ENCODE measurements at regions of chr7 and their contacts with region 1.

Region 1: DNA sequence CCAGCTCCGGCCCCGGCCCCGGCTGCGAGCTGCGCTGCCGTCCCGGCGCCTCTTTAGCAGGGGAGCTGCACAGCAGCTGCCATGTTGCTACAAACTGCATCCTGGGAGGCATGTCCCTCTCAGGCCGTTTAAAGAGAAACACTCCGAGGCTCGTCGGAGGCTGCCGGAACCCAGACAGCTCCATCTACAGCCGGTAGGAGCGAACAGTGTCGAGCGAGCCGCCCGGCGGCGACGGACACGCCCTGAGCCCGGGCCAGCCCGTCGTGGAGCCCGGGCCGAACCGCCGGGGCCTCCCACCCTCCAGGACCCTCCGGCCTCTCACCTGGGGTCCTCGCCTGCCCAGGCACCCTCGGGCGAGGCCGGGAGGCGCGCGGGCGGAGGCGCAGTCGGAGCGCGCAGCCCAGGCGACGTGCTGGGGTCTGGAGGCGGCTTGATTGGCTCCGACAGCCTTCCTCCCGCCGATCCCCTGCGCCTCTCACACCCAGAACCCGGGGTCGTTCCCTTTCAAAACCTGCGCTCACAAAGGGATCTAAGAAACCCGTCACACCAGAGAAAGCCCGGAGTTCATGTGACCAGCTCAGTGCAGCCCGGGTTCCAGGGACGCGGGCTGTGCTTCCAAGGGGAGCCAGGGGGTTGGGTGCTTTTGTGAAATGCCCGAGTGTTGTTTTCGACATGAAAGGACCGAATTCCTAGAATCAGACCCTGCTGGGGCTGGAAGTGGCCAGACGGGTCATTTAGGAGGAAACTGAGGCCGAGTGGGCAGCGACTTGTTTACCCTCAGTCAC is at the start of gene ZNF777:
- DNase-seq: peak; percentile 65 to 84 (median 80)
- ATAC-seq: peak; percentile 99
- H3K4me3 ChIP-seq: peak within 1 kb of the TSS; percentile 80
- H3K4me3 Mint-ChIP-seq: peak within 1 kb of the TSS; percentile 78 to 91 (median 87)
- H3K27ac ChIP-seq: peak within 1 kb of the TSS; percentile 72
- H3K27ac Mint-ChIP-seq: peak within 1 kb of the TSS; percentile 28 to 89 (median 76)
- H3K4me1 ChIP-seq: peaks cover 4 to 16% of the 10 kb centered on the region in 2 donors
- H3K4me1 Mint-ChIP-seq: peaks cover 13 to 46% (median 35%) of the 10 kb centered on the region in 7 donors
- H3K27me3 ChIP-seq: no peaks in the 10 kb centered on the region
- H3K27me3 Mint-ChIP-seq: peaks cover 4 to 29% (median 10%) of the 10 kb centered on the region in 5 donors
- total RNA-seq, gene ZNF777: 11.2 to 16.1 (median 14.3) TPM

Region 2: GRCh38 chr7:149239345-149240191 is 221.1 kb before region 1 on chr7 and contains the start of gene ZNF212:
- CTCF ChIA-PET with region 1: no interaction called
- POLR2A ChIA-PET with region 1: no interaction called
- intact Hi-C with region 1: loop called in 1 of 2 experiments (anchors 1 kb)
- DNase-seq: peak; percentile 75 to 89 (median 84)
- ATAC-seq: peak; percentile 100
- H3K4me3 ChIP-seq: peak within 1 kb of the TSS; percentile 90
- H3K4me3 Mint-ChIP-seq: peak within 1 kb of the TSS; percentile 85 to 95 (median 92)
- H3K27ac ChIP-seq: peak within 1 kb of the TSS; percentile 76
- H3K27ac Mint-ChIP-seq: peak within 1 kb of the TSS; percentile 71 to 89 (median 87)
- H3K4me1 ChIP-seq: peaks cover 14 to 16% of the 10 kb centered on the region in 2 donors
- H3K4me1 Mint-ChIP-seq: peaks cover 23 to 43% (median 33%) of the 10 kb centered on the region in 7 donors
- H3K27me3 ChIP-seq: no peaks in the 10 kb centered on the region
- H3K27me3 Mint-ChIP-seq: peaks cover 0 to 6% (median 0%) of the 10 kb centered on the region in 5 donors
- total RNA-seq, gene ZNF212: 10.4 to 20.6 (median 13.3) TPM

Region 3: GRCh38 chr7:149310113-149310836 is 150.4 kb before region 1 on chr7:
- CTCF ChIA-PET with region 1: no interaction called
- POLR2A ChIA-PET with region 1: no interaction called
- intact Hi-C with region 1: loop called in 1 of 2 experiments (anchors 1 kb)
- DNase-seq: peak in 3 of 9 donors; percentile 11 to 30 (median 26)
- ATAC-seq: peak; percentile 65
- H3K4me3 ChIP-seq: no peak overlapping the region
- H3K4me3 Mint-ChIP-seq: peak overlapping the region in 1 of 10 donors; percentile 0
- H3K27ac ChIP-seq: no peak overlapping the region
- H3K27ac Mint-ChIP-seq: peak overlapping the region in 5 of 9 donors; percentile 2 to 42 (median 9)
- H3K4me1 ChIP-seq: no peaks in the 10 kb centered on the region
- H3K4me1 Mint-ChIP-seq: peaks cover 0 to 6% (median 5%) of the 10 kb centered on the region in 7 donors
- H3K27me3 ChIP-seq: no peaks in the 10 kb centered on the region
- H3K27me3 Mint-ChIP-seq: peaks cover 0 to 12% (median 0%) of the 10 kb centered on the region in 5 donors

Region 4: DNA sequence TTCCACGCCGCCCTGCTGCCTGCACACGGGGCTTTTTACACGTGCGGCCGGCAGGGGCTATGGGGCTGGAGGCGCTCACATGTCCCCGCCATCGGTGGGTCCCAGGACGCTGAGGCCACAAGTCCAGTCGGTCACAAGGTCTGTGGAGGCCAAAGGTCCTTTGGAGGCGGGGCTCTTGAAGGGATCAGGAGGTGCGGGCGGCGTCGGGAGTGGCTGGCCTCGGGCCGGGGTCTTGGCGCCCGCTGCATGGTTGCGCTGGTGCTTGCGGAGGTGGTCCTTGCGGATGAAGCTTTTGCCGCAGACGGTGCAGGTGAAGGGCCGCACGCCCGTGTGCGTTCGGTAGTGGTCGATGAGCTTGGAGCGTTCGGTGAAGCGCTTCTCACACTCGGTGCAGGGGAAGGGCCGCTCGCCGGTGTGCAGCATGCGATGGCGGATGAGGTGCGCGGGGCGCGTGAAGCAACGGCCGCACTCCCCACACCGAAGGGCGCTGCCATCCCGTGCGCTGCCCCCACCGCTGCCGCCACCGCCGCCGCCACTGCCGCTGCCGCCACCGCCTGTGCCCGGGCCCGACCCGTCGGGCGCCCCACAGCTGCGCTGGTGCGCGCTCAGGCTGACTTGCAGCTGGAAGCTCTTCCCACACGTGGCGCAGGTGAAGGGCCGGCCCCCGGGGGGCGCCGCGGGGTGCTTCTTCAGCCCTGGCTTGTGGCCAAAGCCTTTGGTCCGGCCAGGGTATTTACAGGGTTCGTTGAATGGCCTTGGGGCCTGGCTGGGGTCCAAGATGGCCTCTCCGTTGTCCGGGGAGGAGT is 13.8 kb after region 1 on chr7:
- CTCF ChIA-PET with region 1: no interaction called
- POLR2A ChIA-PET with region 1: no interaction called
- intact Hi-C with region 1: loop called in 1 of 2 experiments (anchors 2 kb)
- DNase-seq: peak in 1 of 9 donors; percentile 20
- ATAC-seq: no peak
- H3K4me3 ChIP-seq: no peak overlapping the region
- H3K4me3 Mint-ChIP-seq: no peak overlapping the region
- H3K27ac ChIP-seq: no peak overlapping the region
- H3K27ac Mint-ChIP-seq: peak overlapping the region in 1 of 9 donors; percentile 14
- H3K4me1 ChIP-seq: no peaks in the 10 kb centered on the region
- H3K4me1 Mint-ChIP-seq: peaks cover 0 to 8% (median 3%) of the 10 kb centered on the region in 7 donors
- H3K27me3 ChIP-seq: no peaks in the 10 kb centered on the region
- H3K27me3 Mint-ChIP-seq: no peaks in the 10 kb centered on the region

Measured in naive thymus-derived CD4-positive, alpha-beta T cell (primary cell).